Sciatic nerve (tissue), 2 donors: ENCODE measurements at regions of chr1 and their contacts with region 1.

Region 1: DNA sequence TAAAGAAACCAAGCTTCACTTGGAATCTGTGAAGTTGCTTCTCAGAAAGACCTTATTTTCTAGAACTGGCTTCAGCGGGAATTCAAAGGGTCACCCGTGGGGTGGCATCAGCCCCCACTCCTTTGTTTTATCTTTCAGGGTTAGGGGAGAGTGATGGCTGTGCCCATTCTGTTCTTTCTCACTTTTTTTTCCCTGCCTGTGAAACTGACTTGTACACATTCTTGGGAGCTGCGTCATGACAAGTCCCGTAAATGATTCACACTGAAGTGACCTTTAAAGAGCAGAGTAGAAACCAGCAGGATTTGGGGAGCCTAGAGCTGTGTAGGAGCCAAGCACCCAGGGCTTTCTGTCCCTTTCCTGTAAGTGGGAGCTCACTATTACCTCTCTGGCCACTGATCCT is 43.8 kb downstream of the SLC44A3 start:
- DNase-seq: peak; percentile 65
- ATAC-seq: peak; percentile 82

Region 2: DNA sequence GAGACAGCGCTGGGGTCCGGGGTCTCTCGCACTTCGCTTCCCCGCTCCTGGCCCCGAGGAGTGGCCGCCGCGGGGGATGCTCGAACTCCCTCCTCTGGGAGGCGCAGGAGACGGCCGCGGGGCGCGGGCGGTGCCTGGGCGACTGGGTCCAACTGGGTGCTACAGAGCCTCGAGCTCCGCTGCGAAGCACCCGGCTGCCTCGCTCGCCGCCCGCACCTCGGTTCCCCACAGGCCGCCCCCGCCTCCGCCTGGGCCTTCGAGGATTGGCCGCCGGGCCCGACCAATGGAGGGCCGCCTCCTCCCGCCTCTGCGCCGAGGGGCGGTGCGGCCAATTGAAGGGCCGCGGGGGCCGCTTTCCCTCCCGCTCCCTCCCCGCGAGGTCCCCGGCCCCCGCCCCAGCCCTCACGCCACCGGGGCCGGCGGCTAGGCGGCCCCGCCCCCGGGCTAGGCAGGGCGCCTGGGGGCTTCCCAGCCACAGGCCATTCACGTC is 63.0 kb after region 1 on chr1 and contains the start of gene CNN3:
- intact Hi-C with region 1: loop called (anchors 10 kb)
- DNase-seq: peak; percentile 95
- ATAC-seq: peak; percentile 93
- total RNA-seq, gene CNN3: 419 TPM